ENCODE measurements at regions of chr7 and their contacts with region 1.

Region 1: GRCh38 chr7:101108330-101108857 is 18.5 kb upstream of the SERPINE1 start:
- DNase-seq: no peak
- H3K4me3 ChIP-seq: no peak overlapping the region
- H3K27ac ChIP-seq: no peak overlapping the region
- H3K4me1 ChIP-seq: peaks cover 0 to 4% (median 0%) of the 10 kb centered on the region in 4 experiments; a peak in 2 of 7 replicates
- H3K27me3 ChIP-seq: no peaks in the 10 kb centered on the region
- CTCF ChIP-seq: no peak
- EP300 ChIP-seq: no peak
- POLR2A ChIP-seq: no peak
- RAD21 ChIP-seq: no peak

Region 2: GRCh38 chr7:101094416-101095375 is 13.7 kb before region 1 on chr7:
- CTCF ChIA-PET with region 1: interaction called, 22 read pairs
- POLR2A ChIA-PET with region 1: interaction called, 6 read pairs
- DNase-seq: peak; percentile 51 to 92
- H3K4me3 ChIP-seq: no peak overlapping the region
- H3K27ac ChIP-seq: no peak overlapping the region
- H3K4me1 ChIP-seq: peaks cover 0 to 6% (median 3%) of the 10 kb centered on the region in 4 experiments; a peak in 4 of 7 replicates
- H3K27me3 ChIP-seq: no peaks in the 10 kb centered on the region
- CTCF ChIP-seq: peak; percentile 73 to 78 (median 75)
- EP300 ChIP-seq: no peak
- POLR2A ChIP-seq: no peak
- RAD21 ChIP-seq: peak; percentile 67 to 75